ENCODE measurements at regions of chr22 and their contacts with region 1.

Region 1: GRCh38 chr22:37887610-37888378 is 18.3 kb upstream of the MICALL1 start:
- DNase-seq: peak; percentile 93 to 100
- H3K4me3 ChIP-seq: no peak overlapping the region
- H3K27ac ChIP-seq: peak overlapping the region; percentile 62
- H3K4me1 ChIP-seq: peaks cover 37% of the 10 kb centered on the region
- H3K27me3 ChIP-seq: no peaks in the 10 kb centered on the region
- CTCF ChIP-seq: peak; percentile 87

Region 2: DNA sequence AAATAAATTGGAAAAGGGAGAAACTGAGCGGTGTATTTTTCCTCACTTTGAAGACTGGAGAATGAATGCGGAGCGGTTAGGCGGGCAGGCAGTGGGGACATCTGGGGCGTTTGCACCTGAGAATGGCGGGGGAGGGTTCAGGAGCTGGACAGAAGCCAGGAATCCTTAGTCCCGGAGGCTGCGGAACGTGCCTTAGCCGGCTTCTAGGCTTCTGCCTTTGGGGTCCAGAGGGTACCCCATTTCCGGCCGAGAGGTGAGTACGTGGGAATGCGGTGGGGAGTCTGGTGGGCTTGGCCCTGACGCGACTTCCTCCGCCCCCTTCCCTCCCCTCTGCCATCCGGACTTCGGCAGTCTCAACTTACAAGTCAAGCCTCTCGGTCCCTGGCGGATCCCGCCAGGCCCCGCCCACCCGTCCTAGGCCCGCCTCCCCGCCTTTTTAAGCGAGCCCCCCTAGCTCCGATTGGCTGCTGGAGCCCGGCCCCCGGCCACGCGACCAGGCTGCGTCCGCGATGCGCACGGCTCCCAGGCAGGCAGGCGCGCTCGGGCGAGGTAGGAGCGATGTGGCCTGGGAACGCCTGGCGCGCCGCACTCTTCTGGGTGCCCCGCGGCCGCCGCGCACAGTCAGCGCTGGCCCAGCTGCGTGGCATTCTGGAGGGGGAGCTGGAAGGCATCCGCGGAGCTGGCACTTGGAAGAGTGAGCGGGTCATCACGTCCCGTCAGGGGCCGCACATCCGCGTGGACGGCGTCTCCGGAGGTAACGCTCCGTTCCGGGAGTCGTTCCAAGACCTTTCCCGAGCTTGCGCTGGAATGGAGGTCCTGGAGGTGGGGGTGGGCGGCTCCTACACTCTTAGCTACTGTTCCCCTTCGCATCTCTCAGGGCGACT is 80.1 kb before region 1 on chr22 and contains the start of gene GCAT:
- CTCF ChIA-PET with region 1: no interaction called
- POLR2A ChIA-PET with region 1: interaction called, 14 read pairs
- intact Hi-C with region 1: no loop called
- DNase-seq: peak; percentile 96
- H3K4me3 ChIP-seq: peak within 1 kb of the TSS; percentile 100
- H3K27ac ChIP-seq: no peak within 1 kb of the TSS
- H3K4me1 ChIP-seq: peaks cover 18% of the 10 kb centered on the region
- H3K27me3 ChIP-seq: no peaks in the 10 kb centered on the region
- CTCF ChIP-seq: no peak
- total RNA-seq, gene GCAT: 32.3 and 37.7 TPM in 2 replicates

Region 3: DNA sequence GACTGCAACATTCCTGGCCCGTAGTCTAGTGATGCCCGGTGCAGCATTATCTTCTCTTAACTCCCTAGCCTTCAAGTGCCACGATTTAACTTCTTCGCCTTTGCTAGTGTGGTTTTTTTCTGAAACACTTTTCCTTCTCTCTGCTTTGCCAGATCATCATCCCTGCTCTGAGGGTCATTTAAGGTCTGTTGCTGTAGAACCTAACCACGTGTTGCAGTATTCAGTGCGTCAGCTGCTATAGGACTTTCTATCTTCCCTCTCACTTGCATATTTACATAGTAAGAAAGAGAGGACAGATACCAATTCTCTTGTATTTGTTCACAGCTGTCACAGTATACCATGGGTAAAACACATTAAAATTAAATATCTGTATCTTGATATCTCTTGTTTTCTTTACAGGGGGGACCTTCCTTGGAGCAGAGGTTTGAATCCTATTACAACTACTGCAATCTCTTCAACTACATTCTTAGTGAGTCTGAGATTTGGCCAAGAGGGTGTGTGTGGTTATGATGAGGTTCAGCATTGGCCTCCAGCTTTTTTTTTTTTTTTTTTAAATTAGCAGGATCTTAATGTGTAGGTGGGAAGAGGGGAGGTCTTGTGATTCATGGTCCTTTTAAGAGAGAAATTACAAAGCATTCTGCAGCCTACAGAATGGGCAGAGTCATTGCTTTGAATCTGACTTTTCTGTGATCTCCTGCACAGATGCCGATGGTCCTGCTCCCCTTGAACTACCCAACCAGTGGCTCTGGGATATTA is 25.0 kb before region 1 on chr22:
- CTCF ChIA-PET with region 1: no interaction called
- POLR2A ChIA-PET with region 1: interaction called, 15 read pairs
- intact Hi-C with region 1: no loop called
- DNase-seq: no peak
- H3K4me3 ChIP-seq: no peak overlapping the region
- H3K27ac ChIP-seq: no peak overlapping the region
- H3K4me1 ChIP-seq: no peaks in the 10 kb centered on the region
- H3K27me3 ChIP-seq: no peaks in the 10 kb centered on the region
- CTCF ChIP-seq: no peak

Region 4: DNA sequence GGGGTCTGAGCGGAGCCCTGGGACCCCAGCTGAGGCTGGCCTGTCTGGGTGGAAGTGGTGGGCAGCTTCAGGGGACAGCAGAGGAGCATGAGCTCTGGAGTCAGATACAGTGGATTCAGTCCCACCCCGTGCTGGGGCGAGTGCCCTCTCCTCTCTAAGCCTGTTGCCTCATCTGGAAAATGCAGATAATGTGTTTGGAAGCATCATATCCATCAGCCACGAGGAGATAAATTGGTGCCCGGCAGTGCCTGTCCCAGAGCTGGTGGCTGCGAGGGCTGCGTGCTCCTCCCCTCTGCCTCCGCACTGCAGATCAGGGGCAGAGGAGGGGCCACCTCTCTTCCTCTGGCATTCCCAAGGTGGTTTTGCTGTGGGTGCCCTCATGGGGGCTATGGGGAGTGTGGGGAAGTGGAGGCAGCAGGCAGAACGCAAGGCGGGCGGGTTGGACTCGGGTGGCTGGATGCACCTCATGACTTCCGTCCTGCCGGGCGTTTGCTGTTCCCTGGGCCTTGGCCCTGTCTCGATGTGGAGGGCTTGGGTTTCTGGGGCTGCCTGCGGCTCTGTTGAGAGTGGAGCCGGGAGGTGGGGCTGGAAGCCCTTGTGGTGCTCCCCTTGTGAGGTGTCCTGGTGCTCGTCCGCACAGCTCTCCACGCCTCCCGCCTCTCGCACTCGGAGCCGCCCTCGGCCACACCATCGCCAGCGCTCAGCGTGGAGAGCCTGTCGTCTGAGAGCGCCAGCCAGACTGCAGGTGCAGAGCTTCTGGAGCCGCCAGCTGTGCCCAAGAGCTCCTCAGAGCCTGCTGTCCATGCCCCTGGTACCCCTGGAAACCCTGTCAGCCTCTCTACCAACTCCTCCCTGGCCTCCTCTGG is 39.2 kb after region 1 on chr22:
- CTCF ChIA-PET with region 1: interaction called, 16 read pairs
- POLR2A ChIA-PET with region 1: no interaction called
- intact Hi-C with region 1: no loop called
- DNase-seq: no peak
- H3K4me3 ChIP-seq: no peak overlapping the region
- H3K27ac ChIP-seq: no peak overlapping the region
- H3K4me1 ChIP-seq: no peaks in the 10 kb centered on the region
- H3K27me3 ChIP-seq: no peaks in the 10 kb centered on the region
- CTCF ChIP-seq: no peak

Region 5: GRCh38 chr22:37953437-37954179 is 65.8 kb after region 1 on chr22 and contains the starts of genes C22orf23 and POLR2F:
- CTCF ChIA-PET with region 1: interaction called, 12 read pairs
- POLR2A ChIA-PET with region 1: no interaction called
- intact Hi-C with region 1: loop called (anchors 1 kb)
- DNase-seq: peak; percentile 91 to 96
- H3K4me3 ChIP-seq: peak within 1 kb of the TSS; percentile 68
- H3K27ac ChIP-seq: peak within 1 kb of the TSS; percentile 1; the same call in 1 of the 2 replicates
- H3K4me1 ChIP-seq: peaks cover 18% of the 10 kb centered on the region
- H3K27me3 ChIP-seq: no peaks in the 10 kb centered on the region
- CTCF ChIP-seq: no peak
- total RNA-seq, gene C22orf23: 1.0 and 1.7 TPM in 2 replicates
- total RNA-seq, gene POLR2F: 147 and 180 TPM in 2 replicates

Measured in PC-9 (cell line).